Mammary epithelial cell (primary cell): ENCODE measurements at regions of chr20 and their contacts with region 1.

Region 1: GRCh38 chr20:56636716-56637115 is 7.6 kb downstream of the TFAP2C start:
- DNase-seq: peak; percentile 92
- H3K4me3 ChIP-seq: no peak overlapping the region
- H3K27ac ChIP-seq: peak overlapping the region; percentile 73
- H3K4me1 ChIP-seq: peaks cover 54% of the 10 kb centered on the region
- H3K27me3 ChIP-seq: no peaks in the 10 kb centered on the region
- CTCF ChIP-seq: no peak

Region 2: GRCh38 chr20:56689288-56689687 is 52.6 kb after region 1 on chr20:
- CTCF ChIA-PET with region 1: interaction called, 14 read pairs
- dilution Hi-C with region 1: loop called (anchors 5 kb)
- in situ Hi-C with region 1: no loop called
- intact Hi-C with region 1: loop called (anchors 2 kb)
- DNase-seq: peak; percentile 67
- H3K4me3 ChIP-seq: no peak overlapping the region
- H3K27ac ChIP-seq: peak overlapping the region; percentile 45
- H3K4me1 ChIP-seq: peaks cover 33% of the 10 kb centered on the region
- H3K27me3 ChIP-seq: no peaks in the 10 kb centered on the region
- CTCF ChIP-seq: no peak